Activated naive CD4-positive, alpha-beta T cell treated with anti-CD3 and anti-CD28 coated beads for 36 hours (primary cell): ENCODE measurements at regions of chr6 and their contacts with region 1.

Region 1: GRCh38 chr6:142946181-142946923 is 1.4 kb upstream of the HIVEP2 start:
- DNase-seq: peak; percentile 97
- H3K4me3 Mint-ChIP-seq: peak overlapping the region; percentile 99
- H3K27ac Mint-ChIP-seq: peak overlapping the region; percentile 98
- H3K4me1 Mint-ChIP-seq: peaks cover 29% of the 10 kb centered on the region
- H3K27me3 Mint-ChIP-seq: no peaks in the 10 kb centered on the region

Region 2: DNA sequence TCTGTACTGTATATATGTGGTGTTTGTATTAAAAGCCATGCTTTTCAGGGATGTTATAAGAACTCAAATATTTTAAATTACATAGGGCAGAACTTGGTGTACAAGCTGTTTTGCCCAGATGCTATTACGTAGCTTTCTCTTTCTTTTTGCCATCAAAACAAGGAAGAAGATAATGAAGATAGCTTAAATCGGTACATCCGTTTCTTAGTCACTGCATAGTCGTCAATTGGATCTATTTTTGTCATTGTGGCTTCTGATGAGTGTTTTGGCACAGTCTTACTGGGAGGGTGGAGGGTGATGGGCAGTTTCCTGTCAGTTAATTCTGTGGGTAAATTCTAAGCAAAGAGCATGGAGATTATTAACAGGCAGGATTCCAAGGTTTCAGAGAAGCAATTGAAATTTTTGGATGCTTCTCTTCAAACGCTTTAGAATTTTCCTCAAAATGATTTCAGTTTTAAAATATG is 1462.7 kb before region 1 on chr6:
- CTCF ChIA-PET with region 1: no interaction called
- intact Hi-C with region 1: loop called (anchors 10 kb)
- DNase-seq: peak; percentile 70
- H3K4me3 Mint-ChIP-seq: peak overlapping the region; percentile 65
- H3K27ac Mint-ChIP-seq: peak overlapping the region; percentile 91
- H3K4me1 Mint-ChIP-seq: peaks cover 33% of the 10 kb centered on the region
- H3K27me3 Mint-ChIP-seq: no peaks in the 10 kb centered on the region

Region 3: DNA sequence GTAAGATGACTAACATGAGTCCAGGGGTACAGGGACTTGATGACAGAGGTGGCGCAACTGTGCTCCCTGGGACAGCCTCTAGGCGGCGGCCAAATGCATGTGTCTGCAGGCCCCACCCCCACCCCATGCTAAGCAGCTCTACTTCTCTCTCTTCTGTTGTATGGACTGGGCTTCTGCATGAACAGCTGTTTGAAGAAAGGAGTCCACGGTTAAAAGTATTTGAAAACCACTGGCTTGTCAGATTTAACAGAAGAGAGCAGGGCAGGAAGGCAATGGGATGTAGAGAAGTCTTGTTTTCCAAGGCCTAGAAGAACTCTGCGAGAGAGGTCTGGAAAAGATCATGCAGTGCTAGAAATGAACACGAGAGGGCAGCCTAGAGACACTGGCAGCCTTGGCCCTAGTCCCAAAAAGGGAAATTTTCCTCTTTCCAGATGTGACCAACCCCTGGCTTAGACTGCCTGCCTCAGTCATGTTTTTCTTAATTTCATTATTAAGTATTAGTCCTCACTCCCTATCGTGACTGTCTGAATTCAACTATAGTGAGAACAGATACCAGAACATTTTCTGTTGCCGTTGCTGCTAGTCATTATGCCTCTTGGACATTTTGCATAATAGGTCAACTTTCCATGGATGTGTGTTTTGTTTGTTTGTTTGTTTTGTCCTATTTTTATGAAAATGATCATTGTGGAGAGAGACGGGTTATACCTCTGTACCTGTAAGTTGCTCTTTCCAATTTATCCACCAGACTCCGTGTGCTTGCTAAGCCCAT is 379.5 kb before region 1 on chr6:
- CTCF ChIA-PET with region 1: no interaction called
- intact Hi-C with region 1: loop called (anchors 1 kb)
- DNase-seq: peak; percentile 81
- H3K4me3 Mint-ChIP-seq: no peak overlapping the region
- H3K27ac Mint-ChIP-seq: no peak overlapping the region
- H3K4me1 Mint-ChIP-seq: peaks cover 80% of the 10 kb centered on the region
- H3K27me3 Mint-ChIP-seq: no peaks in the 10 kb centered on the region

Region 4: DNA sequence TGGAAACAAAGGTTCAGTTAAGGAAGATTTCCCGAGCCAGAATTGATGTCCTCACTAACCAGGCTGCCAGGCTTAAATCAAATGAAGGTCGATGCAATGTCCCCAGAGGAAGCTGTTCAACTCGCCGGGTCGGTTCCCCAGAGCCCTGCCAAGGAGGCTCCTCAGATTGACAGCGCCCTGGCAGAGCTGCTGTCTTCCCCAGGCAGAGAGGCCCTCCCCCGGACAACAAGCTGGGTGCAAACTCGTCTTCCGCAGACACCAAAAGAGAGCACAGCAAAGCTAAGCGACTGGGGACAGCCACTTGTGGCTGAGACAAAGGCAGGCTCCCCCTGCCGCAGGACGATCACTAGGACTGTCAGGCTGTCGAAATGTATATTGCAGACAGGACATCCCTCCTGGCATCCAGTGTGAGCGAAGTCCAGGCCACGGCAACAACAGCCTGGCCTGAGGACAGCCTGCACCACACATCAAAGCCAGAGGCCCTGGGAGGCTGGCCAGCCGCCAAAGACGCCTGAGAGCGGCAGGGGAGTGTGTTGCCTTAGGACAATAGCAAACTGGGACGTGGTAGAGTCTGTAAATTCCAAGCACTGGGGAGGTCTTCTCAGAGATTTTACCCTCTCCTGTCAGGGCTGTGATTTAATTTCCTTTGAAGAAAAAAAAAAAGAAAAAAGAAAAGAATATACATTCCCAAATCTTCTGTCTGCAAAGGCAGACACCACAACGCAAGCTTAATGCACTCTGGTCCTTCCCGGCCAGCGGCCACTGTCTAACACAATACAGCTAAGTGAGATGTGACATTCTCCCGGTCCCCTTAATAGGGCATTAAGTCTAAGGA is 100.5 kb before region 1 on chr6:
- CTCF ChIA-PET with region 1: no interaction called
- intact Hi-C with region 1: loop called (anchors 1 kb)
- DNase-seq: peak; percentile 59
- H3K4me3 Mint-ChIP-seq: peak overlapping the region; percentile 66
- H3K27ac Mint-ChIP-seq: peak overlapping the region; percentile 89
- H3K4me1 Mint-ChIP-seq: peaks cover 95% of the 10 kb centered on the region
- H3K27me3 Mint-ChIP-seq: no peaks in the 10 kb centered on the region

Region 5: DNA sequence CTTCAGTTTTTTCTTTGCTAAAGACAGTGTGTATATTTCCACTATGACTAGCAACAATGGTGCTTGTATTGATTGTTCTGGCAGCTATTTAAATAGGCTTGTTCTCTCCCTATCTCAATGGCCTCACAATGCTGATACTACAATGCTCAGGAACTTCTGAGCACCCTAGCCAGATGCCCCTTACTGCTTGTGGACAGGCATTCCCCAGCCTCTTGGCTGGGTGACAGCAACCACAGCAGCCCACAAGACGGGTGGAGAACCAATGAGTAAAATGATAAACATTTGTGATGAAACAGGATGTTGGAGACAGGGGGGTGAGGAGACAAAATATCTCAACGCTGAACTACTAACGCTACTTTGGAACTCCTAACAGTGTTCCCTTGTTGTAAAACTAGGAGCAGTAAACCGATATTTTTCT is 43.7 kb before region 1 on chr6:
- CTCF ChIA-PET with region 1: no interaction called
- intact Hi-C with region 1: loop called (anchors 1 kb)
- DNase-seq: peak; percentile 81
- H3K4me3 Mint-ChIP-seq: peak overlapping the region; percentile 55
- H3K27ac Mint-ChIP-seq: peak overlapping the region; percentile 91
- H3K4me1 Mint-ChIP-seq: peaks cover 61% of the 10 kb centered on the region
- H3K27me3 Mint-ChIP-seq: no peaks in the 10 kb centered on the region

Region 6: DNA sequence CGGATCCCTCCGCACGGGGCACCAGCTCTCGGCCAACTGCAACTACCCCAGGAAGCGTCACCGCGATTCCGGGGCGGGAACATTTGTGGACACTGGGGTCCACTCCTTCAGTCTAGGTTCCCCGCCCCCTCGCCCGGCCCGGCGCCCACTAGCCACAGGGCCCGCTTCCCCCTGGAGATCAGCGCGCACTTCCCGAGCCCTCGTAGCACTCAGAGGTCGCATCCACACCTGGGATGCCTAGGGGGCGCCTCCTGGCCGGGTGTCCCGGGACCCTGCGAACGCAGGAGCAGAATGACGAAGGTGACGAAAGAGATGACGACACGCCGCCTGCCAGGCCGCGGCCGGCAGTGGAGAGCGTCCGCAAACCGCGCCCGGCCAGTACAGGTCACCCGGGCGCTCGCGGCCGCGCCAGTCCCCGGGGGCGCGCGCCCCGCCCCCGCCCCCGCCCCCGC is 114.0 kb after region 1 on chr6:
- CTCF ChIA-PET with region 1: no interaction called
- intact Hi-C with region 1: loop called (anchors 1 kb)
- DNase-seq: peak; percentile 77
- H3K4me3 Mint-ChIP-seq: peak overlapping the region; percentile 81
- H3K27ac Mint-ChIP-seq: peak overlapping the region; percentile 90
- H3K4me1 Mint-ChIP-seq: peaks cover 28% of the 10 kb centered on the region
- H3K27me3 Mint-ChIP-seq: no peaks in the 10 kb centered on the region

Region 7: DNA sequence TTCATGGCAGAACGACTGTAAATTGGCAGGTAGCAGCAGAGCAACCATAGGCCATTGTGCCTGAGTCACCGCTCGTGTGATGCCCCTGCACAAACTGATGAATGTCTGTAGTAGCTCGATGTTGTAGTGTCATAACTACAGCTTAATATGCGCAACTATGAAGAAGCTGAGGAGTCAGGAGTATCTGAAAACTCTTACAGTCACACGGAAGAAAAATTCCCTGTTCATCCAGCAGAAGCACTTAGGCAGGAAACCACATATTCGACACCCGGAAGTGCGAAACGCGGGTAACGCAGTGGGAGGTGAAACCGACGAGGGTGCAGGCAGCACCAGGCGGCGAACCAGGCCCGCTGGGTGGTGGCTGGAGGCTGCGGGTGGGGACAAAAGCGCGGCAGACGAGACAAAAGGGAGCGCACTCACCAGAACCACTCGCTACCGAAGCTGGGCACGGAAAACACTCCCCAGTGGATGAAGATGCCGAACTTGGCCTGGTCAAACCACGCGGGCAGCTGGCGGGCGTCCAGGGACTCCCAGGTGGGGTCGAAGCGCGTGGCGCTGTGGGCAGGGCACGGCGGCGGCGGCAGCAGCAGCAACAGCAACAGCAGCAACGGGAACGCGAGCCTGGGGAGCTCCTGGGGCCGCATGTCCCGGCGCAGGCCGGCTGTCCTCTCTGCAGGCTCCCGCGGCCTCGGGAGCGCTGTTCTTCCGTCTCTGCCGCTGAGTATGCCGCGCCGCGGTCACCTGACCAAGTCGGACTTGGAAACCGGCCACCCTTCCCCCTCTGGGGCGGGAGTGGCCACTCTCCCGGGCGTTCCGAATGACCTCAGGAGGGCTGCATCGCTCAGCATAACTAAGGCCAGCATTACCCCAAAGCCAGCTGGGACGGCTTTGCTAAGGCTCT is 564.9 kb after region 1 on chr6 and contains the start of gene FUCA2:
- CTCF ChIA-PET with region 1: no interaction called
- intact Hi-C with region 1: loop called (anchors 5 kb)
- DNase-seq: peak; percentile 82
- H3K4me3 Mint-ChIP-seq: peak within 1 kb of the TSS; percentile 85
- H3K27ac Mint-ChIP-seq: peak within 1 kb of the TSS; percentile 85
- H3K4me1 Mint-ChIP-seq: peaks cover 15% of the 10 kb centered on the region
- H3K27me3 Mint-ChIP-seq: no peaks in the 10 kb centered on the region
- total RNA-seq, gene FUCA2: 7.7 to 8.2 TPM